Mammary epithelial cell (primary cell): ENCODE measurements at regions of chr10 and their contacts with region 1.

Region 1: DNA sequence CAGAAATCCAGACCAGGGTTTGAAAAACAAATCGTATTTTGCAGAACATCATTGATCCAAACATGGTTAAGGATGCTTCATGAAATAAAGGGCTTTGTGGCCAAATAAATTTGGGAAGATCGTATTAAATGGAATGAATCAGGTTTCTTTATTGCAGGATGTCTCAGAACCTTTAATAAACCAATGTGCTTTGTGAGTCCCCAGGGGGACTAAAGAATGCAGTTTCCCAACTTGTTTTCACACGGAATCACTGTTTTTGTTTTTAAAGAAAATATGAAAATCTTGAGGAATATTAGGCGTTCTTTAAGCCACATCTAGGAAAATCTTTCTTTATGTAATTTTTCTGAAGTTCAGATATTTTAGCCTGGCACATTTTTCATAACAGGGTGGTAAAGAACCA is 16.8 kb upstream of the CCDC172 start:
- DNase-seq: no peak
- H3K4me3 ChIP-seq: no peak overlapping the region
- H3K27ac ChIP-seq: no peak overlapping the region
- H3K4me1 ChIP-seq: no peaks in the 10 kb centered on the region
- H3K27me3 ChIP-seq: peaks cover 2% of the 10 kb centered on the region
- CTCF ChIP-seq: no peak

Region 2: DNA sequence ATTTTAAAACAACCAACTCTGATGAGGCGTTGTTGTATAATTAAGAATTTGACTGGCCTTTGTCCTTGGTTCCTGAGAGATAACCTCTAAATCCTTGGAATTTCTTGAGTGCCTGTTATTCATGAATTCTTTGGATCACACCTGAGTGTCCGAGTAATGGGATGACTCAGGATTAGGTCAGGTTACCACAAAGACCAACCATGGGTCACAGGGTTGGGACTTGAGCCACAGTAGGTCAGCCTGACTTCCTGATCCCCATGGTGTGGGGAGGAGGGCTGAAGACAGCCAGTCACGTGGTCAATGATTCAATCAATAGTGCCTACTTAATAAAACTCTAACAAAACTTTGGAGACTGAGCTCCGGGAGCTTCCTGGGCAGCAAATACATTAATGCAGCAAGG is 226.9 kb before region 1 on chr10:
- CTCF ChIA-PET with region 1: no interaction called
- dilution Hi-C with region 1: no loop called
- in situ Hi-C with region 1: no loop called
- intact Hi-C with region 1: no loop called
- DNase-seq: peak; percentile 30
- H3K4me3 ChIP-seq: no peak overlapping the region
- H3K27ac ChIP-seq: no peak overlapping the region
- H3K4me1 ChIP-seq: no peaks in the 10 kb centered on the region
- H3K27me3 ChIP-seq: no peaks in the 10 kb centered on the region
- CTCF ChIP-seq: no peak

Region 3: GRCh38 chr10:116364868-116365267 is 57.4 kb after region 1 on chr10:
- CTCF ChIA-PET with region 1: no interaction called
- dilution Hi-C with region 1: loop called (anchors 5 kb)
- in situ Hi-C with region 1: no loop called
- intact Hi-C with region 1: no loop called
- DNase-seq: no peak
- H3K4me3 ChIP-seq: no peak overlapping the region
- H3K27ac ChIP-seq: no peak overlapping the region
- H3K4me1 ChIP-seq: no peaks in the 10 kb centered on the region
- H3K27me3 ChIP-seq: no peaks in the 10 kb centered on the region
- CTCF ChIP-seq: no peak